ENCODE measurements at regions of chr17 and their contacts with region 1.

Region 1: DNA sequence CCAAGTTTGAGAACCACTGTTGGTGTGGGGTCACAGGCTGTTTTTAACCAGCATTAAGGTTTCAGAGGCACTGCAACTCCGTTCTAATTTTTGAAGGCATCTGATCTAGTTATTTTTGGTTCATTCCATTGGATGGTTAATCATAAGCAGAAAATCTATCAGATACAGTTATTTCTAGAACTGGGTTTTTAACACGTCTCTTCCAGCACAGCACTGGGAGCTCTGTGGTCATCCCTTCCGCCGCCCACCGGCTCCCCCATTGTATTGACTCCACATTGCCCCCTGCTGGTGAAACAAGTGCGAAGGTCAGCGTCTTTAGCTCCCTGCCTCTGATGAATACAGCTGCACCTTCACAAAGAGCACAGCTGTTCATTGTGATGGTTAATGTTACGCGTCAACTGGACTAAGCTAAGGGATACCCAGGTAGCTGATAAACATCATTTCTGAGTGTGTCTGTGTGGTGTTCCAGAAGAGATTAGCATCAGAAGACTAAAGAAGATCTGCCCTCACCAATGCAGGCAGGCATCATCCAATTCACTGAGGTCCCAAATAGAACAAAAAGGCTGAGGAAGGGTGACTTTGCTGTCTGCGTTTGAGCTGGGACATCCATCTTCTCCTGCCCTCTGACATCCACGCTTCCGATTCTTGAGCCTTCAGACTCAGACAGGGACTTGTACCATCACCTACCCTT is 8.5 kb downstream of the CCL18 start:
- DNase-seq: peak; percentile 76
- H3K4me3 Mint-ChIP-seq: no peak overlapping the region
- H3K27ac Mint-ChIP-seq: no peak overlapping the region
- H3K4me1 Mint-ChIP-seq: no peaks in the 10 kb centered on the region
- H3K27me3 Mint-ChIP-seq: peaks cover 64% of the 10 kb centered on the region
- CTCF ChIP-seq: peak; percentile 77

Region 2: GRCh38 chr17:35981908-35982330 is 90.7 kb before region 1 on chr17:
- CTCF ChIA-PET with region 1: interaction called, 36 read pairs
- intact Hi-C with region 1: no loop called
- DNase-seq: peak; percentile 46
- H3K4me3 Mint-ChIP-seq: no peak overlapping the region
- H3K27ac Mint-ChIP-seq: no peak overlapping the region
- H3K4me1 Mint-ChIP-seq: no peaks in the 10 kb centered on the region
- H3K27me3 Mint-ChIP-seq: peaks cover 94% of the 10 kb centered on the region
- CTCF ChIP-seq: no peak